HEK293 (cell line): ENCODE measurements at regions of chr22 and their contacts with region 1.

Region 1: DNA sequence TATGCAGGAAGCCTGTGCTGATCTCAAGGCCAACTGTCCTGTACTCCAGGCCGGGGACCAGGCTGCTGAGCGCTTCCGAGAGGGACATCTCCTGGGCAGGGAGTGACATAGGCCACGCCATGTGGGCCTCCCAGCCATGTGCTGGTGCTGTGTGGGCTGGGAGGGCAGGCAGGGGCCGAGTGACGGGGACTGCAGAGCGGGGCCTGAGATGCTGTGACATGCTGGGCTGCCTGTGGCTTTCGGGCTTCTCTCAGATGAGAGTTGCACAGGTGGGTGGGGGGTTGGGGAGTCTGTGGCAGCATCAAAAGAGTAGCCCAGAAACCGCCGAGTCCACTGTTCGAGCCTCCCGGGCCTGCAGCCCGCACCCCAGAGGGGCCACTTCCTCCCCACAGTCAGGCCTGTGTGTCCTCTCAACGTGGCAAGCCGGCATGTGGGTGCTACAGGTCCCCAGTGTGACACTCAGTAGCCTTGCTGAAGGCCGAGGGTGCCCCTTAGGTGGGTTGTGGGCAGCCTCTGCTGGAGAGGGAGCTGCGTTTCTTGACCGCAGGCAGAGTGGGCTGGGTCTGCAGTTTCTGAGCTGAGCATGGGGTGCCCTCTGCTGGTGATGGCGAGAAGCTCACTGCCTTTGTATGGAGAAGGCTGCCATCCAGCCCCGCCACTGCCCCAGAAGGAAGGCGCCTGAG is 101.2 kb downstream of the BCR start:
- H3K4me3 ChIP-seq: no peak overlapping the region
- H3K27ac ChIP-seq: no peak overlapping the region
- H3K4me1 ChIP-seq: no peaks in the 10 kb centered on the region
- CTCF ChIP-seq: peak; percentile 96

Region 2: DNA sequence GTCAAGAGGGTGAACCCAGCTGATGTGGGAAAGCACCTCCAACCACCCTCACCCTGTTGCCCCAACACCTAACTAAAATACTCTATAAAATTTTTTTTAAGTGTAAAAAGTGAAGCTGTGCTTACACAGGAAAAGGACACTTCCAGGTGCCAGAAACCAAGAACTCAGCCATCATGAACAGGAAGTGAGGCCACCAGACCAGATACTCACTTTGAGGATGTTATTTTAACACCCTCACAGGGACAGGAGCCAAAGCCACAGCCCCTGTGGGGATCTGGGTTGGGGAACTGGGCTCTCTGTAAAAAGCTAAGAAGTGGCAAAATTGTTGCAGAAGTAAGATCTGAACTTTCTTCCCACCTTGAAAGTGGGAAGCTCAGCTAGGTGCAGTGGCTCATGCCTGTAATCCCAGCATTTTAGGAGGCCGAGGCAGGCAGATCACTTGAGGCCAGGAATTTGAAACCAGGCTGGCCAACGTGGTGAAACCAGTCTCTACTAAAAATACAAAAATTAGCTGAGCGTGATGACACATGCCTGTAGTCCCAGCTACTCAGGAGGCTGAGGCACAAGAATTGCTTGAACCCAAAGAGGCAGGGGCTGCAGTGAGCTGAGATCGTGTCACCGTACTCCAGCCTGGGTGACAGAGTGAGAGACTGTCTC is 143.5 kb before region 1 on chr22:
- CTCF ChIA-PET with region 1: interaction called, 10 read pairs
- POLR2A ChIA-PET with region 1: no interaction called
- H3K4me3 ChIP-seq: no peak overlapping the region
- H3K27ac ChIP-seq: no peak overlapping the region
- H3K4me1 ChIP-seq: no peaks in the 10 kb centered on the region
- CTCF ChIP-seq: no peak

Region 3: DNA sequence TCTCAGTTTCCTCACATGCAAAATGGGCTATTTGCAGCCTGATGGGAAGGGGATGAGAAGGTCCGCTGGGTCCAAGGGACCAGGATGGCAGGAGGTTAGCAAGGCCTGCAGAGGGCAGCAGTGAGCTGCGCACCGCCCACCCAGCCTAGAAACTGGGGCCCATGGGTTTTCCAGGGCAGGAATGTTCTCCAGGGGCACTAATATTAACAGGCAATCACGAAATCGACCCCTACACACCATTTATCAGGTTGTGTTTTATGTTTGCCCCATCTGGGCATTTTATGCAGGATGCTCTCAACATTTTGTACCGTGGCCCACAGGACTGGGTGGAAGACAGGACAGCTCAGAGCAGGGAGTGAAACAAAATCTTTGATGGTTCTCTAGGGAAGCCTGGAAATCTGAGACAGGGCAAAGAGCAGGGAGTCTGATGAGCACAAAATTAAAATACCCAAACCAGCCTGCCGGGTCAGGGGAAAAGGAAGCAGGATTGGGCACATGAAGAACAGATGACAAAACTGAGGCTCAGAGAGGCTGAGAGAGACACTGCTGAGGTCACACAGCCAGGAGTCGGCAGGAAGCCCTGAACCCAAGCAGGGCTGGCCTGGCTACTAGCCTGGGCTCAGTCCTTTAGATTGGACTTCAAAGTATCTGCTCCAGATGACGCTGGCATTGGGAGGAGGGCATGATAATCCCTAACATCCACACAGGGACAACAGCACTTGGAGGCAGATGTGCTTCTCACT is 102.9 kb before region 1 on chr22:
- CTCF ChIA-PET with region 1: interaction called, 207 read pairs
- POLR2A ChIA-PET with region 1: interaction called, 11 read pairs
- H3K4me3 ChIP-seq: no peak overlapping the region
- H3K27ac ChIP-seq: no peak overlapping the region
- H3K4me1 ChIP-seq: no peaks in the 10 kb centered on the region
- CTCF ChIP-seq: peak; percentile 91

Region 4: GRCh38 chr22:23270212-23270733 is 11.3 kb before region 1 on chr22:
- CTCF ChIA-PET with region 1: interaction called, 21 read pairs
- POLR2A ChIA-PET with region 1: no interaction called
- H3K4me3 ChIP-seq: no peak overlapping the region
- H3K27ac ChIP-seq: no peak overlapping the region
- H3K4me1 ChIP-seq: no peaks in the 10 kb centered on the region
- CTCF ChIP-seq: no peak

Region 5: DNA sequence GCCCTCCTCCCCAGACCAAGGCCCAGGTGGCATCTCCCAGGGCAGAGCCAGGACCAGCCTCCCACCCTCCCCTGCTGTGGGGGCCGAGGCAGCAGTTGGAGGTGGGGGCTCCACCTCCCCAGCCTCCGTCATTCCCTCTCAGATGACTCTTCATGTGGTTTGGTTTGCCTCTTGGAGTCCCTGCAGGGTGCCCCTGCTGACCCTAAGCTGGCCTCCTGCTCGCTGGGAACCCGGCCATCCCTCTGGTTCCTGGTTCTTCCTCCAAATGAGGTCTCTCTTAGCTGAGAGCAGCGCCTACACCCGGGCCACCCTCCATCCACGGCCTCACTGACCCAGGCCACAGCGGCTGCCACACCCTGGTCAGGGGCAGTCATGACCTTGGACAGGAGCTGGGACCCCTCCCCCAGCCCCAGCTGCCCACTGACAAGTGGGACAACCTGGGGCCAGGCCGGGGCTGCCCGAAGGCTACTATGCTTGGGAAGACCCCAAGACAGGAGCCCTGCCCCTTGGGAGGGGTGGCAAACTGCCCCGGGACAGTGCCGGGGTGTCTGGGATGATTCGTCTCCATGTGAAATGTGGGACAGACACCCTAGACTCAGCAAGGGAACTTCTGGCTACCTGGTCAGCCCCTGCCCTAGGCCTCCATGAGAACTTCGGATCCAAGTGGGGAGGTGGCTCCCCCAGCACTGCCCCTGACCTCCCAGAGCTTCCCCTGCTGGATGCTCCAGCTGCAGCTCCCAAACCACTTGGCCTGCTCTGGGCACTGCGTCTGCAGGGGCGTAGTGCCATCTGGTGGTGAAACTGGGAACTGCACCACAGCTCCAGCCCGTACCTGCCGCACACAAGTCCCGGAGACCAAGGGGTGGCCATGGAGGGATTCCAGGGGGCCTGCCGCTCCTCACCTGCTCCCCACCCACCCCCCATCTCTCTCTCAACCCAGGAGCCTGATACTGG is 104.0 kb after region 1 on chr22:
- CTCF ChIA-PET with region 1: interaction called, 11 read pairs
- POLR2A ChIA-PET with region 1: no interaction called
- H3K4me3 ChIP-seq: no peak overlapping the region
- H3K27ac ChIP-seq: no peak overlapping the region
- H3K4me1 ChIP-seq: no peaks in the 10 kb centered on the region
- CTCF ChIP-seq: peak; percentile 98

Region 6: GRCh38 chr22:23504516-23504915 is 223.0 kb after region 1 on chr22:
- CTCF ChIA-PET with region 1: no interaction called
- POLR2A ChIA-PET with region 1: no interaction called
- H3K4me3 ChIP-seq: no peak overlapping the region
- H3K27ac ChIP-seq: no peak overlapping the region
- H3K4me1 ChIP-seq: no peaks in the 10 kb centered on the region
- CTCF ChIP-seq: no peak